Activated naive CD4-positive, alpha-beta T cell treated with anti-CD3 and anti-CD28 coated beads for 36 hours (primary cell): ENCODE measurements at regions of chr16 and their contacts with region 1.

Region 1: GRCh38 chr16:27235055-27235937 is 32.0 kb downstream of the KDM8 start:
- DNase-seq: peak; percentile 89
- H3K4me3 Mint-ChIP-seq: peak overlapping the region; percentile 65
- H3K27ac Mint-ChIP-seq: peak overlapping the region; percentile 98
- H3K4me1 Mint-ChIP-seq: peaks cover 98% of the 10 kb centered on the region
- H3K27me3 Mint-ChIP-seq: no peaks in the 10 kb centered on the region

Region 2: GRCh38 chr16:27203429-27204231 is 31.7 kb before region 1 on chr16 and contains the start of gene KDM8:
- CTCF ChIA-PET with region 1: interaction called, 13 read pairs
- intact Hi-C with region 1: loop called (anchors 1 kb)
- DNase-seq: peak; percentile 100
- H3K4me3 Mint-ChIP-seq: peak within 1 kb of the TSS; percentile 99
- H3K27ac Mint-ChIP-seq: peak within 1 kb of the TSS; percentile 100
- H3K4me1 Mint-ChIP-seq: peaks cover 50% of the 10 kb centered on the region
- H3K27me3 Mint-ChIP-seq: no peaks in the 10 kb centered on the region
- total RNA-seq, gene KDM8: 11.3 to 13.9 TPM

Region 3: DNA sequence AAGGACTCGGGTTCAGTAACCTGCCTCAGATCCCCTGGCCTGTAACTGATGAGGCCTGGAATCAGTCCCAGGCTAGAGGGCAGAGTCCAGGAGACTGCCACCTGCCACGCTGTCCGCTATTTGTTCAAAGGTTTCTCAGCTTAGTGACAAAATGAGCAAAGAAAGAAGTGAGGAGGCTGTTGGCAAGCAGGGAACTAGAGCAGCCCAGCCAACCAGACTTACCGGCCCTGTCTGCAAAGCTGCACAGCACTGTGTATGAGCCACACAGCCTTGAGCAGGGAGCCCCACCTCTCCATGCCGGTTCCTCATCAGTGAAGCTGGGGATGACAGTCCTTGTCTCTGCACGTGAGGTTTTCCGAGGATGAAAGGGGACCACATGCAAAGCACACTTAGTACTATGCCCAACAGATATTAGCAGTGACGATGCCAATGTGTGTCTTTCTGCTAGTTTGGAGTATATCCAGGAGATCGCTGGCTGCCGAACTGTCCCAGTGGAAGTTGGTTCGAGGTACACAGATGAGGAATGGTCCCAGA is 20.8 kb before region 1 on chr16:
- CTCF ChIA-PET with region 1: no interaction called
- intact Hi-C with region 1: no loop called
- DNase-seq: no peak
- H3K4me3 Mint-ChIP-seq: no peak overlapping the region
- H3K27ac Mint-ChIP-seq: no peak overlapping the region
- H3K4me1 Mint-ChIP-seq: peaks cover 8% of the 10 kb centered on the region
- H3K27me3 Mint-ChIP-seq: no peaks in the 10 kb centered on the region

Region 4: GRCh38 chr16:27268376-27269299 is 33.3 kb after region 1 on chr16 and contains the start of gene NSMCE1:
- CTCF ChIA-PET with region 1: interaction called, 40 read pairs
- intact Hi-C with region 1: loop called (anchors 1 kb)
- DNase-seq: peak; percentile 99
- H3K4me3 Mint-ChIP-seq: peak within 1 kb of the TSS; percentile 96
- H3K27ac Mint-ChIP-seq: peak within 1 kb of the TSS; percentile 96
- H3K4me1 Mint-ChIP-seq: peaks cover 67% of the 10 kb centered on the region
- H3K27me3 Mint-ChIP-seq: no peaks in the 10 kb centered on the region
- total RNA-seq, gene NSMCE1: 112 to 117 TPM

Region 5: DNA sequence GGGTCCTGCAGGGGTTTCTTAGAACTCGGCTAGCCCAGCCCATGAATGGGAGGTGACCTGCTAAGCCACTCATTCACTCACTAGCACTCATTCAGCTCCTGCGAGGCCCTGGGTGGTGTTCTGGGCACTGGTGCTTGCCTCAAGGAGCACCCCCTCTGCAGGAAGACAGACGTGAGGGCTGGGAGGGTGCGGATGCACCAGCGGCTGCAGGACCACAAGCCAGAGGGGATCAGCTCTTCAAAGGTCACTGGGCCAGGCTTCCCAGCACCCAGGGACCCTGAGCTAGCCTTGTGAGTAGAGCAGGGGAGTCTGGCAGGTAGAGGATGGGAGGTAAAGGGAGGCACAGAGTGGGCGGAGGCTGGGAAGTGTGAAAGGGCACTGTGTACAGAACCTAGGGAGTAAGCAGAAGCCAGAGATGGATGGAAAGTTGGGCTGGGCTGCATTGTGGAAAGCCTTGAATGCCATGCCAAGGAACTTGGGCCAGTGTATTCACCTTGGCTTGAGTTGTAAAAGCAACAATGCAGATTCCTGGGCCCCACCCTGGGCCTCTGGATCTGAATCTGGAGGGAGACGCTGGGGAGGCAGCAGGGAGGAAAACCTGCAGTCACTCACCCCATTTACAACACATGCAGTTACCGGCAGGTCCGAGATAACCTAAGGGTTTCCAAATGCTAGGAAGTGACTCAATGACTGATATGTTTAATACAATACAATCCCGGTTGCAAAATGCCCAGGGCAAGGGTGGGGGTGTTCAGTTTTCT is 80.2 kb after region 1 on chr16:
- CTCF ChIA-PET with region 1: interaction called, 103 read pairs
- intact Hi-C with region 1: loop called (anchors 1 kb)
- DNase-seq: peak; percentile 86
- H3K4me3 Mint-ChIP-seq: peak overlapping the region; percentile 99
- H3K27ac Mint-ChIP-seq: peak overlapping the region; percentile 97
- H3K4me1 Mint-ChIP-seq: peaks cover 59% of the 10 kb centered on the region
- H3K27me3 Mint-ChIP-seq: no peaks in the 10 kb centered on the region

Region 6: GRCh38 chr16:27367461-27368357 is 132.4 kb after region 1 on chr16:
- CTCF ChIA-PET with region 1: interaction called, 132 read pairs
- intact Hi-C with region 1: loop called (anchors 1 kb)
- DNase-seq: peak; percentile 97
- H3K4me3 Mint-ChIP-seq: peak overlapping the region; percentile 53
- H3K27ac Mint-ChIP-seq: peak overlapping the region; percentile 99
- H3K4me1 Mint-ChIP-seq: peaks cover 76% of the 10 kb centered on the region
- H3K27me3 Mint-ChIP-seq: no peaks in the 10 kb centered on the region

Region 7: DNA sequence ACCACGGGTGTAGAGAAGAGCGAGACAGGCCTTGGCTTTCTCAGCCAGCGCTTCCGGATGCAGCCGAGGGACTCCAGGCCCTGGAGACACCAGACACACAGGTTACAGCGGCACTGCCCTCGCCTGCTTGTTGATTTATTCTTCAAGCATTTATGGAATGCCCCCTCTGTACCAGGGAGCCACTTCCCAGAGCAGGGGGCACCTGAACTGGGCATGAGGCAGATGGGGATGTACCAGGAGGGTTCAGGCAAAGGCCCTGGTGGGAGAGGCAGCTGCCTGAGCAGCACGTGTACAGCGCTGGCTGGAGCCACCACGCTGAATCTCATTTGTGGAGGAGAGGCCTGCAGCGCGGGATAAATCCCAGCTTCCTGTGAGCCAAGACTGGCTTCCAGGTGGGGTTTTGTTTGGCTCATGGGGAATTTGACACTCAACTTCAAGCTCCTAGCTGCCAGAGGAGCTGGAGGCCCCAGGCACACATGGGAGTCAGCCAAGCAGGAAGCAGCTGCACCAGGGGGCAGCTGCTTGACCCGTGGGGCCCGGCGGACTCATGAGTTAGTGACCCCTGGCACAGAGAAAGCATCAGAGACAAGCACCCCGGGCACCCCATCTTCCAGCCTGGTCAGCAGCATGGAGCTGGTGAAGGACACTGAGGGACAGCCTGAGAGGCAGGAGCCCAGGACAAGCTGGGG is 226.3 kb after region 1 on chr16:
- CTCF ChIA-PET with region 1: interaction called, 3 read pairs
- intact Hi-C with region 1: loop called (anchors 1 kb)
- DNase-seq: no peak
- H3K4me3 Mint-ChIP-seq: no peak overlapping the region
- H3K27ac Mint-ChIP-seq: no peak overlapping the region
- H3K4me1 Mint-ChIP-seq: peaks cover 30% of the 10 kb centered on the region
- H3K27me3 Mint-ChIP-seq: no peaks in the 10 kb centered on the region